K562 (cell line): ENCODE measurements at regions of chr2 and their contacts with region 1.

Region 1: GRCh38 chr2:173090973-173091660 is 15.5 kb downstream of the MAP3K20 start:
- DNase-seq: peak; percentile 39 to 75 (median 57)
- ATAC-seq: peak; percentile 83
- H3K4me3 ChIP-seq: peak overlapping the region; percentile 18
- H3K27ac ChIP-seq: peak overlapping the region; percentile 92
- H3K4me1 ChIP-seq: peaks cover 10 to 32% of the 10 kb centered on the region in 2 experiments; a peak in 4 of 5 replicates
- H3K27me3 ChIP-seq: no peaks in the 10 kb centered on the region
- CTCF ChIP-seq: peak; percentile 62 to 90 (median 80)
- EP300 ChIP-seq: peak; percentile 37; the same call in 1 of the 2 replicates
- POLR2A ChIP-seq: peak; percentile 42; the same call in 1 of the 2 replicates
- RAD21 ChIP-seq: peak in 1 of 2 experiments; percentile 61; a peak in 3 of 4 replicates

Region 2: GRCh38 chr2:173075781-173076580 is 15.1 kb before region 1 on chr2 and contains the start of gene MAP3K20:
- CTCF ChIA-PET with region 1: no interaction called
- POLR2A ChIA-PET with region 1: interaction called, 51 read pairs
- in situ Hi-C with region 1: no loop called
- intact Hi-C with region 1: no loop called
- DNase-seq: peak; percentile 72 to 87 (median 86)
- ATAC-seq: peak; percentile 80
- H3K4me3 ChIP-seq: peak within 1 kb of the TSS; percentile 66
- H3K27ac ChIP-seq: peak within 1 kb of the TSS; percentile 78
- H3K4me1 ChIP-seq: peaks cover 17% of the 10 kb centered on the region in 2 experiments; a peak in 4 of 5 replicates
- H3K27me3 ChIP-seq: peaks cover 0 to 1% of the 10 kb centered on the region in 2 experiments; a peak in 1 of 5 replicates
- CTCF ChIP-seq: peak; percentile 42 to 64 (median 58); a peak in 5 of 6 replicates
- EP300 ChIP-seq: no peak
- POLR2A ChIP-seq: peak; percentile 59; the same call in 1 of the 2 replicates
- RAD21 ChIP-seq: peak; percentile 23 to 58; a peak in 3 of 4 replicates
- polyA plus RNA-seq, gene MAP3K20: 9.8 to 9.9 TPM

Region 3: DNA sequence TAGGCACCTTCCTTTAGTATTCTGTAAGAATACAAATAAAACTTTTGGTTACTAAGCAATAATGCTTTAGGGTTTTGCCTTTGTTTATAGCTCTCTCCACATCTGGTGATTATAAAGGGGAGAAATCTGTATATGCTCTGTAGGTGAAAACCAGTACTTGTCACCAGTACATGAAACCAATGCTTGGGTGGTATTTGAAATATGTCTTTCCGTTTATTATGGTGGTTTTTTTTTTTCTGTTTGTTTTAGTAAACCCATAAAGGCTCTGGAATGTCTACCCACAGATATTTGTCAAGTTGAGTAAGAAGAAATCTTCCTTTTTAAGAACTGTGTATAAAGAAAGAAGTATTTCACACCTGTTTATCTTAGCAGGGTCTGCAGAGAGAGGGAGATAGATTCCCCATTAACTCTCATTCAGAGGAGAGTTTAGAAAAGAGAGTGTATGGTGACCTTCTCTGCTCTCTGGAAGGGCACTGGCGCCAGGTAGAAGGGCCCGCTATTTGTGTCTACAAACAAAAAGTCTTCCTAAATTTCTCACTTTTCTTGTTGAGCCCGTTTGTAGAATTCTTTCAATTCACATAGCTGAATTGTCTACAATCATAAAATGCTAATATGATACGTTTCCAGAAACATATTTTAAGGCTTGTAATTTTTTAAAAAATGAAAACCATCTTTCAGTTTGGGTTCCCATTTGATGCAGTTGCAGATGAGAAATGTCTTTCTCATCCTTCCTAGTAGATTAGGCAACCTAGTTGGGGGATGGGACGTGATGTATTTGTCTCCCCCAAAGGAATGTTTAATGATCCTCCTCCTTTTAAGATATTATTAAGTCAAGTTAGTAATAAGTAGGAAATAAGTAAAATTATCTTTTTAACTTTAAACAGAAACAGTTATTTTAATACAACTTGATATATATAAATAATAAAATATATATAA is 18.4 kb after region 1 on chr2:
- CTCF ChIA-PET with region 1: no interaction called
- POLR2A ChIA-PET with region 1: interaction called, 17 read pairs
- in situ Hi-C with region 1: no loop called
- intact Hi-C with region 1: no loop called
- DNase-seq: no peak
- ATAC-seq: no peak
- H3K4me3 ChIP-seq: no peak overlapping the region
- H3K27ac ChIP-seq: no peak overlapping the region
- H3K4me1 ChIP-seq: peaks cover 0 to 4% of the 10 kb centered on the region in 2 experiments; a peak in 3 of 5 replicates
- H3K27me3 ChIP-seq: no peaks in the 10 kb centered on the region
- CTCF ChIP-seq: no peak
- EP300 ChIP-seq: no peak
- POLR2A ChIP-seq: no peak
- RAD21 ChIP-seq: no peak

Region 4: DNA sequence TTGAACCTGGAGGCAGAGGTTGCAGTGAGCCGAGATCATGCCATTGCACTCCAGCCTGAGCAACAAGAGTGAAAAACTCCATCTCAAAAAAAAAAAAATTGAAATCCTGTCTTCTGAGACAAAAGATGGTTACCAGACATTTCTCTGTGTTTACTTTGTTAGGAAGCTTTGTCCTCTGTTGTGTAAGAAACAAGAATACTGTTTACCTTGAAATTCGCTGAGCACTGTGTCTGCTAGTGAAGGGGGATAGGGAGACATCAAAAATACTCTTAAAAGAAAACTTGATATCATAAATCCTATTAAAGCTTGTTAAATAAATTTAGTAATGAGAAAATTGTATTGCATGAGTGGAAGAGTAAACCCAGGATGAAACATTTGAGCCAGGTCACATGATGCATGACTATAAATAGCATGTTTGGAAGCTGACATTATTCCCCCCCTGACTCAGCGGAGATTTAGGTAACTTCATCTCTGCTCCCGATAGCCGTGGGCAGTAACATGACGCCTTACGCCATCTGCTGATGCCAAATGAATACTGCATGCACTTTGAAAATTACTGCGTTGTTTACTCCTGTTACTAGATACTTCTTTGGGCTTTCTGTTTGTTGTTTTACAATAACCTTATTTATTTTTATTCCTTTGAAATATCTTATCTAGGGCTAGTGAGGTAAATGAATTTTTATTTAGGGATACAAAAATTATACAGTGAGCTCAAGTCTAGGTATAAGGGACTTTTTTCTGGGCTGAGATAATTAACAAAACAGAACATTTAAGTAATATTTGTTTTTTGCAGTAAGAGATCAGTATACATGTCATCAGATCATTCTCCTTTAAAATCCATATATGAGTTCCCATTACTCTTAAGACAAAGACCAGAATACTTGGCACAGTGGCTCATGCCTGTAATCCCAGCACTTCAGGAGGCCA is 119.4 kb after region 1 on chr2:
- CTCF ChIA-PET with region 1: interaction called, 8 read pairs
- POLR2A ChIA-PET with region 1: no interaction called
- in situ Hi-C with region 1: no loop called
- intact Hi-C with region 1: loop called (anchors 1 kb)
- DNase-seq: peak; percentile 70 to 87 (median 78)
- ATAC-seq: peak; percentile 95
- H3K4me3 ChIP-seq: no peak overlapping the region
- H3K27ac ChIP-seq: no peak overlapping the region
- H3K4me1 ChIP-seq: no peaks in the 10 kb centered on the region
- H3K27me3 ChIP-seq: no peaks in the 10 kb centered on the region
- CTCF ChIP-seq: peak; percentile 91 to 98 (median 91)
- EP300 ChIP-seq: peak; percentile 42; the same call in 1 of the 2 replicates
- POLR2A ChIP-seq: no peak
- RAD21 ChIP-seq: peak; percentile 97 to 98

Region 5: GRCh38 chr2:173278794-173279526 is 187.8 kb after region 1 on chr2:
- CTCF ChIA-PET with region 1: no interaction called
- POLR2A ChIA-PET with region 1: no interaction called
- in situ Hi-C with region 1: no loop called
- intact Hi-C with region 1: no loop called
- DNase-seq: no peak
- ATAC-seq: no peak
- H3K4me3 ChIP-seq: no peak overlapping the region
- H3K27ac ChIP-seq: no peak overlapping the region
- H3K4me1 ChIP-seq: peaks cover 0 to 4% of the 10 kb centered on the region in 2 experiments; a peak in 1 of 5 replicates
- H3K27me3 ChIP-seq: no peaks in the 10 kb centered on the region; a peak in 2 of 5 replicates
- CTCF ChIP-seq: no peak
- EP300 ChIP-seq: no peak
- POLR2A ChIP-seq: no peak
- RAD21 ChIP-seq: no peak

Region 6: GRCh38 chr2:173354601-173355131 is 263.5 kb after region 1 on chr2 and contains the start of gene CDCA7:
- CTCF ChIA-PET with region 1: no interaction called
- POLR2A ChIA-PET with region 1: no interaction called
- in situ Hi-C with region 1: no loop called
- intact Hi-C with region 1: loop called (anchors 2 kb)
- DNase-seq: peak; percentile 89 to 95 (median 94)
- ATAC-seq: peak; percentile 88
- H3K4me3 ChIP-seq: peak within 1 kb of the TSS; percentile 78
- H3K27ac ChIP-seq: peak within 1 kb of the TSS; percentile 93
- H3K4me1 ChIP-seq: peaks cover 17 to 22% of the 10 kb centered on the region in 2 experiments; a peak in 4 of 5 replicates
- H3K27me3 ChIP-seq: 0 out of 5 replicates have a peak, but pooled peaks cover 0 to 5% of the 10 kb centered on the region in 2 experiments
- CTCF ChIP-seq: peak in 2 of 3 experiments; percentile 4 to 19; a peak in 2 of 6 replicates
- EP300 ChIP-seq: 0 out of 2 replicates have a peak, but pooled peaks have one; percentile 38
- POLR2A ChIP-seq: peak; percentile 83
- RAD21 ChIP-seq: 0 out of 4 replicates have a peak, but pooled peaks of 1 of the 2 experiments have one; percentile 16
- polyA plus RNA-seq, gene CDCA7: 28.5 to 41.4 TPM